ENCODE measurements at regions of chr20 and their contacts with region 1.

Region 1: GRCh38 chr20:35329435-35330139 is 37.4 kb upstream of the FAM83C start:
- DNase-seq: no peak
- ATAC-seq: peak; percentile 94
- H3K4me3 ChIP-seq: no peak overlapping the region
- H3K27ac ChIP-seq: no peak overlapping the region
- H3K4me1 ChIP-seq: no peaks in the 10 kb centered on the region
- H3K27me3 ChIP-seq: no peaks in the 10 kb centered on the region
- CTCF ChIP-seq: peak; percentile 51 to 66 (median 64)
- EP300 ChIP-seq: no peak
- POLR2A ChIP-seq: no peak
- RAD21 ChIP-seq: peak; percentile 43; the same call in 1 of the 2 replicates

Region 2: DNA sequence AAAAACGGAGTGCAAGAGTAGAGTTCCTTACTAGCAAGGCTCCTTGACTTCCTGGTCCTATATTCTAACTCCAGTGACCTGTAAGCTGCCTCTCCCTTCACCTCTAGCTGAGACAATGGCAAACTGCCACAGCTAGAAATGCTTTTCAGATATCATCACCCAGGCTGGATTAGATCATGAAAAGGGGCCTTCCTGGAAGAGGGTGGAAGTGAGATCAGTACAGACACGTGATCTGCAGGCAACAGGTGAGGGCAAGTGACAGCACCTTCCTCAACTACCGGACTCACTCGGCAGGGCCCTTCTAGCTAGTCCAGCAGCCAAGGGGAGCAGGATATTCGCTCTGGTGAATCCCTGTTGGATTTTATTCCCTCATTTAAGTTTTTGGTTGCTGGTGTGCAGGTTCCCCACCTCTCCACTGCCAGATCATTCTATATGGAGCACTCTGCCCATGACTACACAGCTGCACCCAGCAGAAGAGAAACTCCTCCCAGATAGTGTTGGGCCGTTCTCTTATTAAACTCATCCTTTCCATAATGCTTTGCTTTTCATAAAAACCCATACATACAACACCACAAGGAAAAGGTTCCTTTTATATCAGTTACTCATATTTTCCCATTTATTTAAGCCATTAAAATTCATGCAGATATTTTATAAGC is 11.0 kb before region 1 on chr20:
- CTCF ChIA-PET with region 1: interaction called, 13 read pairs
- POLR2A ChIA-PET with region 1: no interaction called
- RAD21 ChIA-PET with region 1: no interaction called
- SMC1A ChIA-PET with region 1: interaction called, 3 read pairs
- in situ Hi-C with region 1: no loop called
- intact Hi-C with region 1: no loop called
- DNase-seq: no peak
- ATAC-seq: no peak
- H3K4me3 ChIP-seq: no peak overlapping the region
- H3K27ac ChIP-seq: no peak overlapping the region
- H3K4me1 ChIP-seq: no peaks in the 10 kb centered on the region
- H3K27me3 ChIP-seq: no peaks in the 10 kb centered on the region
- CTCF ChIP-seq: no peak
- EP300 ChIP-seq: no peak
- POLR2A ChIP-seq: no peak
- RAD21 ChIP-seq: no peak

Region 3: DNA sequence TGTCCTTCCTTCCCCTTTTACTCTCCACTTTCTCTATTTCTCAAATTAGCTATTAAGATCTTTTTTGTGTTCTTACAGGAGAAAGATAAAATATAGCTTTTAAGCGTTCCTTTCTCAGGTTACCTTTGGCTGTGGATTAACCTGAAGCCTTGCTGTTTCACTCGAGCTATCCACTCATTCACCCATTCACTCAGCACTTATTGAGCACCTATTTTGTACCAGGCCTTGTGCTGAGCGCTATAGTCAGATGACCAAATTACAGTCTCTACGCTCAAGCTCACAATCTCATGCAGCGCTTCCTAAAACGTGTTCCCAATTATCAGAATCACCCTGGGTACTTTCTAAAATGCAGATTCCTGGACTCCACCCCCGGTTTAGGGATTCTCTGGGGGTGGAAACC is 124.1 kb after region 1 on chr20:
- CTCF ChIA-PET with region 1: no interaction called
- POLR2A ChIA-PET with region 1: no interaction called
- RAD21 ChIA-PET with region 1: no interaction called
- SMC1A ChIA-PET with region 1: no interaction called
- in situ Hi-C with region 1: no loop called
- intact Hi-C with region 1: no loop called
- DNase-seq: no peak
- ATAC-seq: no peak
- H3K4me3 ChIP-seq: peak overlapping the region; percentile 78
- H3K27ac ChIP-seq: no peak overlapping the region
- H3K4me1 ChIP-seq: peaks cover 4% of the 10 kb centered on the region
- H3K27me3 ChIP-seq: no peaks in the 10 kb centered on the region
- CTCF ChIP-seq: no peak
- EP300 ChIP-seq: no peak
- POLR2A ChIP-seq: no peak
- RAD21 ChIP-seq: no peak

Measured in GM12878 (cell line).